ENCODE measurements at regions of chr7 and their contacts with region 1.

Region 1: GRCh38 chr7:36291387-36292316 is 98.0 kb upstream of the ANLN start:
- DNase-seq: peak; percentile 88
- H3K4me3 ChIP-seq: peak overlapping the region; percentile 74
- H3K27ac ChIP-seq: peak overlapping the region; percentile 56
- H3K4me1 ChIP-seq: 0 out of 2 replicates have a peak, but pooled peaks cover 7% of the 10 kb centered on the region
- H3K27me3 ChIP-seq: no peaks in the 10 kb centered on the region

Region 2: DNA sequence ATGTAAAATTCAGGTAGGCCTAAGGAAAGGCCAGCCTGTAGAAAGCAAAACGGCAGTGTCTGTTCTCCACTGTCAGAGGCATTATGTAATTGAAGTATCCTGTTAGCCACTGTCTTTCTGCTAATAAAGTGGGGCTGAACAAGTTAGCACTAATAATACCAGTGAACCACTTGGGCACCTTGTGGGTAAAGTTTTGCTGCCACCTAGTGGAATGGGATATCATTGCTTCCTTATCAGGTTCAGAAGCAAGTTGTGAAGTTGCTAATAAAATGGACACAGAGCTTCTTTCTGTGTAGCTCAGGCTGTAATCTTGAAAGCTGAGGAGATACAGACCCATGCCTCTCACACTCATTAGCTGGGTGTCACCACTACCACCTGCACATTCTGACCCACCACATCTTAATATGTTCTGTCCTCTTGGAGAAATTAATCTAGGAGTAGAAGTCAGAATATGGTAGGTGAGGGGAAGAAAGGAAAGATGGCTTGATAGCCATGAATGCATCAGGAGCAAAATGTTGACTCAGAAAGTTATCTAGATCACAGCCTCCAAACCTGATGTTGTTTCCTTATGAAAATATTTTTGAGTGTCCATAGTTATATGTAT is 315.7 kb before region 1 on chr7:
- in situ Hi-C with region 1: loop called (anchors 5 kb)
- DNase-seq: peak; percentile 67
- H3K4me3 ChIP-seq: no peak overlapping the region
- H3K27ac ChIP-seq: no peak overlapping the region
- H3K4me1 ChIP-seq: no peaks in the 10 kb centered on the region
- H3K27me3 ChIP-seq: peaks cover 5% of the 10 kb centered on the region; the same call in 1 of the 2 replicates